Posterior cingulate gyrus (tissue), 11 donors: ENCODE measurements at regions of chr5 and their contacts with region 1.

Region 1: GRCh38 chr5:154811653-154812365 is 38.6 kb downstream of the FAXDC2 start:
- DNase-seq: peak in 8 of 10 donors; percentile 44 to 92 (median 58)

Region 2: DNA sequence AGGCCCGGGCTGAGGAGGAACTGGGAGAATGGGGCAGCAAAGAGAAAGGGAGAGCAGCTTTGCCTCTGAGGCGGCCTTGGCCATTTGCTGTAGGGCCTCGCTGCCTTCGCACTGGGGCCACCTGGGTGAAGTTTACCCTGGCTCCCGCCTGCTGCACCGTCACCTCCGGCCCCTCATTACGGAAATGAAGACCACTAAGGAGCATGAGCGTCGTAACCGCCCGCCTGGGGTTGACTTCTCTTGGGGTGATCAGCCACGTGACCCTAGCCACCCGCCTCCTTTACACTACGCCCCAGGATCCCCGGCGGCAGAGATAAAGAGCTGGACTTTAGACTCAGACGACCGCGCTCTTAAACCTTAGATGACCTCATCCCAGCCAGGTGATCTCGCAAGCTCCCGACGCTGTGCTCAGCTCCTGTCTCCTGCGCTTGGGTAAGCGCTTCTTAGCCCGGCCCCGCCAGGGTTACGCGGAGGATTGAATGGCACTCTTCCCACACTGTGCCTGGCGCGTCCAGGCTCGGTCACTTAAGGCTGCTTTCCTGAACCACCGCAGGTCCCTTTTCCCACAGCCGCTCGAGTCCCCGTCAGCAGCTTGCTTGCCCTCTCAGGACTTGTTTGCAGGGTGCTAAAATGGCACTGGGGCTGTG is 164.6 kb before region 1 on chr5:
- intact Hi-C with region 1: loop called (anchors 1 kb)
- DNase-seq: peak in 1 of 10 donors; percentile 84